AG04449 (cell line): ENCODE measurements at regions of chr12 and their contacts with region 1.

Region 1: GRCh38 chr12:95998611-95999286 is 2.6 kb upstream of the HAL start:
- DNase-seq: no peak
- H3K4me3 ChIP-seq: no peak overlapping the region
- CTCF ChIP-seq: peak; percentile 61

Region 2: DNA sequence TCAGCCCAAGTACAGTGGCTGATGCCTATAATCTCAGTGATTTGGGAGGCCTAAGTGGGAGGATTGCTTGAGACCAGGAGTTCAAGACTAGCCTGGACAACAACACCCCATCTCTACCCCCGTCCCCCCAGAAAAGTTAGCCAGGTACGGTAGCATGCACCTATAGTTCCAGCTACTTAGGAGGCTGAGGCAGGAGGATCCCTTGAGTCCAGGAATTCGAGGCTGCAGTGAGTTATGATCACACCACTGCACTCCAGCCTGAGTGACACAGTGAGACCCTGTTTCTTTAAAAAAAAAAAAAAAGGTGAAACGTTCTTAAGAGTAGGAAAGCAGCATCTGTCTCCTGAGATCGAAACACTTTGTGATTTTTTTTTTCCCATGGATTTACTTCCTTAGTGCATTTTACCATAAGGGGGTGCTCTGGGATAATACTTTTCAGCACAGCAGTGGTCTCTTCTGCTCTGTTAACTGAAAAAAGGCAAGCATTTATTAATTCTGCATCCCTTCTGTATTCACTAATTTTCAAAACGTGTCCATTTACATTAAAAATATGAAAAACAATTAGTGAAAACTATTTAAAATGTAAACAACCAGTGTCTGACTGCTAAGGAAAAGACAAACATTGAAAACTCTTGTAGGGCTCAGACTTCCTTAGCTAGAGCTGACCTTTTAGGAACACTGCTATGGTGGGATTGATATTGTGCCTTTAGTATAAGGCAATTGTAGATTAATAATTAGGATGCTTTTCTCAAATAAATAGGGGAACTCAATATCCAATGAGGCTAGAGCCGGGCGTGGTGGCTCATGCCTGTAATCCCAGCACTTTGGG is 416.3 kb before region 1 on chr12:
- CTCF ChIA-PET with region 1: interaction called, 12 read pairs
- POLR2A ChIA-PET with region 1: no interaction called
- DNase-seq: no peak
- H3K4me3 ChIP-seq: no peak overlapping the region
- CTCF ChIP-seq: peak; percentile 48

Region 3: GRCh38 chr12:95953000-95953399 is 45.7 kb before region 1 on chr12:
- CTCF ChIA-PET with region 1: interaction called, 10 read pairs
- POLR2A ChIA-PET with region 1: no interaction called
- DNase-seq: no peak
- H3K4me3 ChIP-seq: no peak overlapping the region
- CTCF ChIP-seq: no peak

Region 4: DNA sequence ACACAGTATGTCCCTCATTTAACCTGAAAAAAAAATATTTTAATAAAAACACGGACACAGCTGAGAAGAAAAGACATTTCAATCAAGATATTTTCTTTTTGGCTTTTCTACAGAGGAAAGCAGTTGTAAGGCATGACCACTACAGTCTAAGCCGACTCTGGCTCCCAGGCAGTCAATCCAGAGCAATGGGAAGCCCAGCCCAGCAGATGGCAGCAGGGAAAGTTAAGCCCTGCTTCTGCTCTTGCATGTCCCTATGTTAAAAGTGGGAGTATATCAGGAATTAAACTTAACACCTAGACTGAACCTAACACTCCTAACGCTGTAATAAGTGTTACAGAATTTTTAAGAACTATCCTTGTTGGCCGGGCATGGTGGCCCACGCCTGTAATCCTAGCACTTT is 16.9 kb after region 1 on chr12:
- CTCF ChIA-PET with region 1: interaction called, 33 read pairs
- POLR2A ChIA-PET with region 1: no interaction called
- DNase-seq: no peak
- H3K4me3 ChIP-seq: no peak overlapping the region
- CTCF ChIP-seq: peak; percentile 56

Region 5: DNA sequence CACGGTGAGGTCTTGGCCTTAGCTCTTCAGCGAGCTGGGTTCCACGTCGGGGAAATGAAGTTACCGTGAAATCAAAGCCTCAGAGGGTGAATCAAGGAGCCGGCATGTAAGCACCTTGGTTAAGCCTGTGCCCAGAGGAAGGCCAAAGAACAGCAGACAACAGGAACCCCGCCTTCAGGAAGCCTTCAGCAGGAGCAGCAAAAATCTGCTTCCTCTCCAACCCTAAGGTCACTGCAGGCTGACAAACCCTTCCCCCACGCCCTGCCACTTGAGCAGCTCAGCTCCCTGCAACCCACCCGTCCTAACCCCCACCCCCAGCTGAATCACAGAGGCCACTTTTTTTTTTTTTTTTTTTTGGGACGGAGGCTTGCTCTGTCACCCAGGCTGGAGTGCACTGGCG is 109.6 kb after region 1 on chr12:
- CTCF ChIA-PET with region 1: no interaction called
- POLR2A ChIA-PET with region 1: no interaction called
- DNase-seq: no peak
- H3K4me3 ChIP-seq: no peak overlapping the region
- CTCF ChIP-seq: no peak